Common myeloid progenitor, CD34-positive (primary cell): ENCODE measurements at regions of chr3 and their contacts with region 1.

Region 1: DNA sequence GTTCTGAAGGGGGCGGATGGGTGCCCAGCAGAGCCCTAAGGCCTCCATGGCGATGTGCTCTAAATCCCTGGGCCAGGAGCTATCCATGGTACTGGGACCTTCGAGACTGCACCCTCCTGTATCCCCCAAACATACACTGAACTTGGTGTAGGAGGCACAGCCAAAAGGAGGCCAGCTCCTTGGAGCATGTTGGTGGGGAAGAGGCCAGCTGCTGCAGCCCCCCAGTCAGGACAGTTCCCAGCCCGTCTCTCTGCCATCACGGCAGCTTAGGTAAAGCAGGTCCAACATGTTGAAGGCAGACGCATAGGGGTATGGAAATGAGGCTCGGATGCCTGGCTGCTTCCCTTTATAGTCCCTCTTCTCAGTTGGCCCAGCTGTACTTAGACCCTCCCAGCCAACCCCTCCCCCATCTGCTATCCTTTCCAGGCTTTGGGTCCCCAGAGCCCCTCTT is 1.8 kb downstream of the CAMKV start:
- DNase-seq: peak; percentile 49 to 80 (median 77)
- H3K4me3 ChIP-seq: no peak overlapping the region
- H3K27ac ChIP-seq: no peak overlapping the region
- H3K4me1 ChIP-seq: peaks cover 0 to 18% (median 12%) of the 10 kb centered on the region in 4 experiments
- H3K27me3 ChIP-seq: peaks cover 2 to 77% (median 32%) of the 10 kb centered on the region in 5 experiments

Region 2: GRCh38 chr3:49882166-49882565 is 14.3 kb after region 1 on chr3:
- CTCF ChIA-PET with region 1: interaction called, 26 read pairs
- POLR2A ChIA-PET with region 1: no interaction called
- DNase-seq: no peak
- H3K4me3 ChIP-seq: no peak overlapping the region
- H3K27ac ChIP-seq: no peak overlapping the region
- H3K4me1 ChIP-seq: peaks cover 0 to 6% (median 0%) of the 10 kb centered on the region in 4 experiments
- H3K27me3 ChIP-seq: no peaks in the 10 kb centered on the region